ENCODE measurements at regions of chr7 and their contacts with region 1.

Region 1: DNA sequence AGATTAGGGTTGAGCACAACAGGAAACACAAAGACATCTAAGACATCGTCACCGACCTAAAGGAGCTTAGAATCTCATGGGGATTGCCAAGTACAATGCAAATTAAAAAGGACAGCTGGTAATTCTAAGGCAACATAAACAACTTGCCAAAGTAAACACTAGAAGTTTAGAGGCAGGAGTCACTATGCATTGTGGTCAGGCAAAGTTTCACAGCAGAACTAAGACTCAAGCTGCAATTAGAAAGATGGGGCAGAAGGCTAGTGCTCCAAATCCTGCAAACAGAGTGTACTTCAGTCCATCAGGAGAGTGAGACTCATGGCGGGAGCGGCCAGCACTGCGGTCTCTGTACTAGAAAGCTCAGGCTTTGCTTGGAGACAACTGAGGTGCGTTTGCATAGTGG is 52.7 kb downstream of the HIPK2 start:
- DNase-seq: peak; percentile 85
- H3K4me3 Mint-ChIP-seq: peak overlapping the region; percentile 54
- H3K27ac Mint-ChIP-seq: peak overlapping the region; percentile 68
- H3K4me1 Mint-ChIP-seq: peaks cover 43% of the 10 kb centered on the region
- H3K27me3 Mint-ChIP-seq: no peaks in the 10 kb centered on the region
- CTCF ChIP-seq: no peak

Region 2: DNA sequence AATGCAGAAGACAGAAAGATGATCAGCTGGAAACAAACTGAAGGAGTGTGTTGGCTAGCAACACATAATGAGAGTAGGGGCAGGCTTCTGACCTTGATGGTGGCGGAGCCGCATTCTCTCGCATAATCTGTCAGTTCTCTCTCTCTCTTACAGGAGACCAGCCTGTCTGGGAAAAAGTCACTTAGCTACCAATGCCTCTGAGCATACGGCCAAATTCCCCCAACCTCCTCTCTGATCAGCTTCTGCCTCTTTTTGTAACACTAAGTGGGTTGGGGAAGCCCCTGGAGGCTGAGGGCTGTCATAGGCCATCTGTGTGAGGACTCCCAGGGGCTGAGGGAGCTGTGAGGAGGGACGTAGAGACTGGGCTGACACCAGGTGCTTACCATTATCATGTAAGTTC is 51.8 kb before region 1 on chr7:
- CTCF ChIA-PET with region 1: interaction called, 4 read pairs
- POLR2A ChIA-PET with region 1: interaction called, 11 read pairs
- intact Hi-C with region 1: no loop called
- DNase-seq: peak; percentile 23
- H3K4me3 Mint-ChIP-seq: no peak overlapping the region
- H3K27ac Mint-ChIP-seq: peak overlapping the region; percentile 85
- H3K4me1 Mint-ChIP-seq: peaks cover 34% of the 10 kb centered on the region
- H3K27me3 Mint-ChIP-seq: no peaks in the 10 kb centered on the region
- CTCF ChIP-seq: no peak

Region 3: GRCh38 chr7:139680676-139681462 is 44.2 kb before region 1 on chr7:
- CTCF ChIA-PET with region 1: interaction called, 3 read pairs
- POLR2A ChIA-PET with region 1: interaction called, 12 read pairs
- intact Hi-C with region 1: loop called (anchors 2 kb)
- DNase-seq: peak; percentile 95
- H3K4me3 Mint-ChIP-seq: peak overlapping the region; percentile 13
- H3K27ac Mint-ChIP-seq: peak overlapping the region; percentile 94
- H3K4me1 Mint-ChIP-seq: peaks cover 54% of the 10 kb centered on the region
- H3K27me3 Mint-ChIP-seq: no peaks in the 10 kb centered on the region
- CTCF ChIP-seq: no peak

Region 4: GRCh38 chr7:139737221-139738100 is 12.4 kb after region 1 on chr7:
- CTCF ChIA-PET with region 1: interaction called, 5 read pairs
- POLR2A ChIA-PET with region 1: interaction called, 35 read pairs
- intact Hi-C with region 1: no loop called
- DNase-seq: no peak
- H3K4me3 Mint-ChIP-seq: no peak overlapping the region
- H3K27ac Mint-ChIP-seq: peak overlapping the region; percentile 87
- H3K4me1 Mint-ChIP-seq: peaks cover 78% of the 10 kb centered on the region
- H3K27me3 Mint-ChIP-seq: no peaks in the 10 kb centered on the region
- CTCF ChIP-seq: no peak

Measured in MCF 10A (cell line).